Activated T-helper 1 cell treated with anti-CD3 and anti-CD28 coated beads, Interleukin-12 subunit alpha, Interleukin-12 subunit beta, Interleukin-2, Interleukin-4 antibody, amounts not matched to agents 30 ng/mL and 10 ng/mL and 1 ng/mL, durations not matched to agents 14 hours and 24 hours and 36 hours (primary cell): ENCODE measurements at regions of chr9 and their contacts with region 1.

Region 1: DNA sequence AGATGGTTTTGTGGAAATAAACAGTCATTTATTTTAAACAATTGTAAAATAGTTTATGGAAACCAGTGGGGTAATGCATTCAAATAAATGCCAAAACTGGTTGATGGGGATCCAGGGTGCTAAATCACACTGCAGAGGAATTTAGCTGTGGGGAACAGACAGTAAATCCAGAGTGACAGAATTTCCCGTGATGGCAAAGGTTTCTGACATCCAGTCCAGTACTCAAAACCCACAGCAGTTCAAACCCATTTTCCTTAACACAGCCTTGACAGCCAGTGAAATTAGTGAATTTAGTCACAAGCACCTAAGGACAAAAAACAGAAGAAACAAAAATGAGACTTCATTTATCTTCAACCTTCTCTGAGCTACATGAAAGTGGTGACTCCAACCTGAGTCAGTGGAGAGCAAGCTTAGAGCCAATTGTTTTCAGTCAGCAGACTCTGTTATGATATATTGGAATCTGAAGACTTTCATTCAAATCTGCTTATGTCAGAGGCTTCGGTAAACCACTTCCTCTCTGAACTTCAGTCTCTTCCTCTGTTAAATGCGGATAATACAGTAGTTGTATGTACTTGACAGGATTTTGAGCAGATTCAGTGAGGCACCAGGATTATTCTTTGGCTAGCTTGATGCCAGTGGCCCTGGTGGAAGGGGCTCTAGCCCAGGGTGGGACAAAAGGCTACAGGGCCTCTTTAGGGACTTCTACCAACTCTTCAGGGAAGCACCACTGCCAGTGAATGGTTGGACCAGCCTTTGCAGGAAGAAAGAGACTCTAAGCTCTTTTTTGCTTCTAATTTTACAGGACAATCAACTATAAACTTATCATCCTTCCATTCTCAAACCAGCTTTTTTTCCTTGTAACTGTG is 185.3 kb downstream of the MAPKAP1 start:
- DNase-seq: peak; percentile 38
- H3K4me3 Mint-ChIP-seq: peak overlapping the region; percentile 61
- H3K27ac Mint-ChIP-seq: peak overlapping the region; percentile 91
- H3K4me1 Mint-ChIP-seq: peaks cover 33% of the 10 kb centered on the region
- H3K27me3 Mint-ChIP-seq: no peaks in the 10 kb centered on the region

Region 2: GRCh38 chr9:125650271-125650737 is 128.6 kb after region 1 on chr9:
- intact Hi-C with region 1: loop called (anchors 1 kb)
- DNase-seq: no peak
- H3K4me3 Mint-ChIP-seq: peak overlapping the region; percentile 54
- H3K27ac Mint-ChIP-seq: peak overlapping the region; percentile 85
- H3K4me1 Mint-ChIP-seq: peaks cover 71% of the 10 kb centered on the region
- H3K27me3 Mint-ChIP-seq: no peaks in the 10 kb centered on the region

Region 3: GRCh38 chr9:125785248-125785751 is 263.6 kb after region 1 on chr9:
- intact Hi-C with region 1: no loop called
- DNase-seq: no peak
- H3K4me3 Mint-ChIP-seq: no peak overlapping the region
- H3K27ac Mint-ChIP-seq: peak overlapping the region; percentile 18
- H3K4me1 Mint-ChIP-seq: peaks cover 12% of the 10 kb centered on the region
- H3K27me3 Mint-ChIP-seq: no peaks in the 10 kb centered on the region

Region 4: GRCh38 chr9:125854553-125855275 is 333.0 kb after region 1 on chr9:
- intact Hi-C with region 1: loop called (anchors 1 kb)
- DNase-seq: no peak
- H3K4me3 Mint-ChIP-seq: no peak overlapping the region
- H3K27ac Mint-ChIP-seq: no peak overlapping the region
- H3K4me1 Mint-ChIP-seq: peaks cover 7% of the 10 kb centered on the region
- H3K27me3 Mint-ChIP-seq: no peaks in the 10 kb centered on the region